OCI-LY7 (cell line): ENCODE measurements at regions of chr7 and their contacts with region 1.

Region 1: GRCh38 chr7:116236020-116236630 is 25.8 kb downstream of the TES start:
- DNase-seq: peak; percentile 29
- H3K4me3 ChIP-seq: no peak overlapping the region
- H3K27ac ChIP-seq: no peak overlapping the region
- H3K4me1 ChIP-seq: no peaks in the 10 kb centered on the region
- CTCF ChIP-seq: peak; percentile 78

Region 2: DNA sequence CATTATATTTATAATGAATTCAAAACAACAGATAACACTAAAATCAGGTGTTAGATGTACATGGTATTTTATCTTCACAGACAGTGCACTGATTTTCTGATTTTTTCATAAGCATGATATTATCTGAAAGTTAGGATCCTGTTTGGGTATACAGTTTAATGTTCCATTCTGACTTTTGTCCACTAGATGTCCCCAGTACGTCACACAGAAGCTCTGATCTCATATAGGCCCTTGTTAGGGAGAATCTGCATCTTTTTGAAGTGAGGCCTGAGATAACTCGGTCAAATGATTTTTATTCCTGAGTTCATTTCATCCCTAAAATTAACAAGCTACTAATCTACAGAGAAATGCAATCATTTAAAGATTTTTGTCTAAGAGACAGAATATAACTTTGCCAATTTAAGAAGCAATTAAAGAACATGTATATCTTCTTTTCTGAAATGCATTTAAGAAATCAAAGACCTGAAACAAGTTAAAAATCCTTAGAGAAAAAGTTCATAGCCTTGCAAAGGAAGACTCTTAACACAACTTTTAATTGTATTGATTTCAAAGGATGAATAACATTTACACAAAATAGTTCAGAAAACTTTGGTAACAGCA is 97.8 kb before region 1 on chr7:
- CTCF ChIA-PET with region 1: no interaction called
- POLR2A ChIA-PET with region 1: no interaction called
- intact Hi-C with region 1: loop called (anchors 1 kb)
- DNase-seq: peak; percentile 45
- H3K4me3 ChIP-seq: no peak overlapping the region
- H3K27ac ChIP-seq: no peak overlapping the region
- H3K4me1 ChIP-seq: no peaks in the 10 kb centered on the region
- CTCF ChIP-seq: peak; percentile 88

Region 3: GRCh38 chr7:116180302-116180701 is 55.8 kb before region 1 on chr7:
- CTCF ChIA-PET with region 1: interaction called, 3 read pairs
- POLR2A ChIA-PET with region 1: no interaction called
- intact Hi-C with region 1: loop called (anchors 2 kb)
- DNase-seq: peak; percentile 35
- H3K4me3 ChIP-seq: no peak overlapping the region
- H3K27ac ChIP-seq: no peak overlapping the region
- H3K4me1 ChIP-seq: no peaks in the 10 kb centered on the region
- CTCF ChIP-seq: peak; percentile 81